HepG2 (cell line): ENCODE measurements at regions of chr10 and their contacts with region 1.

Region 1: DNA sequence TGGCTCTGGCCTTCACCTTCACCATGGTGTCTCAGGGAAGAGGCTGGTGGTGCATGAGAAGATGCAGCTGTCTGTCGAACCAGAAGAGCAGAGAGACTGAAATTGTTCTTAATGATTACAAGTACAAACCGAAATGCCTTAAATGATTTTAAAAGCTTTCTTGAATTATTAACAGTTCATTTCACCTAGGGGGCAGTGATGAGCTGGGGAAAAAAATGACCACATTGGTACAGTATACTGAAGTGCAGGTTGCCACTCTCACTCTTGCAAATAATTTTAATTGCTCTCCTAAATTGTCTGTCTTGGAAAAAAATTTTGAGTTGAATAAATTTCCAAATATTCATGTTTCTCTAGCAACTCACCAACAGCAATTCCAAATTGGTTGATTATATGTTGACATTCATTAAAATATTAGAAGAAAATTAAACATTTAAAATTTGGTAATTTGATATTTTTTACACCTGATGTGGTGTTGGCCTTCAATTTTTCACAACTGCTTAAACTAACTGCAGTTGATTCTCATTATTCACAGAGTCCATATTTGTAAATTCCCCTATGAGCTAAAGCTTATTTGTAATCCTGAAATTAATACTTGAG is 692.6 kb downstream of the ZWINT start:
- DNase-seq: peak; percentile 18
- ATAC-seq: peak; percentile 57
- H3K4me3 ChIP-seq: no peak overlapping the region
- H3K27ac ChIP-seq: no peak overlapping the region
- H3K4me1 ChIP-seq: no peaks in the 10 kb centered on the region
- H3K27me3 ChIP-seq: no peaks in the 10 kb centered on the region
- CTCF ChIP-seq: no peak
- EP300 ChIP-seq: no peak
- POLR2A ChIP-seq: no peak
- RAD21 ChIP-seq: no peak

Region 2: GRCh38 chr10:55641601-55642000 is 26.8 kb before region 1 on chr10:
- CTCF ChIA-PET with region 1: no interaction called
- POLR2A ChIA-PET with region 1: no interaction called
- in situ Hi-C with region 1: no loop called
- intact Hi-C with region 1: no loop called
- DNase-seq: no peak
- ATAC-seq: no peak
- H3K4me3 ChIP-seq: no peak overlapping the region
- H3K27ac ChIP-seq: no peak overlapping the region
- H3K4me1 ChIP-seq: no peaks in the 10 kb centered on the region
- H3K27me3 ChIP-seq: no peaks in the 10 kb centered on the region
- CTCF ChIP-seq: no peak
- EP300 ChIP-seq: no peak
- POLR2A ChIP-seq: no peak
- RAD21 ChIP-seq: no peak

Region 3: DNA sequence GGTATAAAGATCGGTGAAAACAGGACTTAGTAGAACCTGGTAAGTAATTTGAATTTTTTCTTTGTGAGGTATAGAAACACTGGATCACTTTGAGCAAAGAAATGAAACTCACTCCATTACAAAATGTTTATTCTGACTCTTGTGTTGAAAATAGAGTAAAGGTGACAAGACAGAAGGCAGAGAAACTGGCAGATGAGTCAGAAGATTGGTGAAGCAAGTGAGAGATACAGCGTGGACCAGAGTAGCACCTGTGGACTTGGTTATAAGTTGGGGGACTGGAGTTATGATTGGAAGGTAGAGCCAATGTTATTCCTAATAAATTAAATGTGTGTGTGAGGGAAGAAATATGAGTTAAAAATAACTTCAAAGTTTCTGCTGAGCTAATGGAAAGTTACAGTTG is 71.7 kb after region 1 on chr10:
- CTCF ChIA-PET with region 1: no interaction called
- POLR2A ChIA-PET with region 1: no interaction called
- in situ Hi-C with region 1: no loop called
- intact Hi-C with region 1: loop called (anchors 2 kb)
- DNase-seq: no peak
- ATAC-seq: no peak
- H3K4me3 ChIP-seq: no peak overlapping the region
- H3K27ac ChIP-seq: no peak overlapping the region
- H3K4me1 ChIP-seq: peaks cover 6% of the 10 kb centered on the region; the same call in 1 of the 2 replicates
- H3K27me3 ChIP-seq: no peaks in the 10 kb centered on the region
- CTCF ChIP-seq: no peak
- EP300 ChIP-seq: no peak
- POLR2A ChIP-seq: no peak
- RAD21 ChIP-seq: no peak

Region 4: DNA sequence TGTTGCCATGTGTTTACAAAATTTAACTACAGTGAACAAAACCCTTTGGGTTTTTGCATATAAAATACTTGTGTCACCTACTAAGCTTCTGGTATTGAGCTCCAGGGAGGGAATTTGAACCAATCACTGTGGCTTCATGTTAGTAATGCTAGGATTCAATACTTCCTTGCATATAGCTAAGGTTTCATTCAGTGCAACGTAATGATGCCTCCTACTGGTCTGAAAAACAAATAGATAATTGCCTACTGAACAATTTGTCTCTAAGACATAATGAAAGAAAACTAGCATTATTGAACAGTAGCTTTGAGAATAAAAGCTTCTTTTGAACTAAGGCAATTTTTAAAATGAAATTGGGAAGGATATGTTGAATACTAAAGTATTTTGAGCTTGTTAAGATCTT is 448.3 kb after region 1 on chr10:
- CTCF ChIA-PET with region 1: interaction called, 3 read pairs
- POLR2A ChIA-PET with region 1: no interaction called
- in situ Hi-C with region 1: loop called (anchors 25 kb)
- intact Hi-C with region 1: no loop called
- DNase-seq: peak; percentile 2
- ATAC-seq: peak; percentile 49; the same call in 1 of the 3 replicates
- H3K4me3 ChIP-seq: no peak overlapping the region
- H3K27ac ChIP-seq: no peak overlapping the region
- H3K4me1 ChIP-seq: no peaks in the 10 kb centered on the region
- H3K27me3 ChIP-seq: no peaks in the 10 kb centered on the region
- CTCF ChIP-seq: peak; percentile 48
- EP300 ChIP-seq: no peak
- POLR2A ChIP-seq: no peak
- RAD21 ChIP-seq: no peak

Region 5: GRCh38 chr10:56175262-56175661 is 506.8 kb after region 1 on chr10:
- CTCF ChIA-PET with region 1: no interaction called
- POLR2A ChIA-PET with region 1: no interaction called
- in situ Hi-C with region 1: no loop called
- intact Hi-C with region 1: no loop called
- DNase-seq: no peak
- ATAC-seq: no peak
- H3K4me3 ChIP-seq: no peak overlapping the region
- H3K27ac ChIP-seq: no peak overlapping the region
- H3K4me1 ChIP-seq: no peaks in the 10 kb centered on the region
- H3K27me3 ChIP-seq: no peaks in the 10 kb centered on the region
- CTCF ChIP-seq: no peak
- EP300 ChIP-seq: no peak
- POLR2A ChIP-seq: no peak
- RAD21 ChIP-seq: no peak